MCF 10A (cell line): ENCODE measurements at regions of chr22 and their contacts with region 1.

Region 1: GRCh38 chr22:32401486-32401885 is 10.6 kb downstream of the RTCB start:
- DNase-seq: no peak
- H3K4me3 Mint-ChIP-seq: no peak overlapping the region
- H3K27ac Mint-ChIP-seq: peak overlapping the region; percentile 19
- H3K4me1 Mint-ChIP-seq: peaks cover 7% of the 10 kb centered on the region
- H3K27me3 Mint-ChIP-seq: no peaks in the 10 kb centered on the region
- CTCF ChIP-seq: no peak

Region 2: DNA sequence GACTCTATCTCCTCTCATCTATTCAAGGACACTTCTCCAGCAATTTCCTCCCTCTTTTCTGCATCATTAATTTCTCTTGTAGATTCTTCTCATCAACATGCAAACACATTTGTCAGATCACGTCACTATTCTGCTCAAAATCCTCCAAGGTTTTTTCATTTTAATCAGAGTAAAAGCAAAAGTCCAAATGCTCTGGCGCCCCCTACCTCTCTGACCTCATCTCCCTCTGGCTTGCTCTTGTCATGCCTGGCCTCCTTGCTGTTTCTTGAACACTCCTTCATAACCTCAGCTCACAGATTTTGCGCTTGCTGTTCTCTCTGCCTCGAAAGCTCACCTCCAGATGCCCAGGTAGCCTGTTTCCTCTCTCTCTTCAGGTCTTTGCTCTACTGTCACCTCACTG is 11.8 kb before region 1 on chr22:
- CTCF ChIA-PET with region 1: interaction called, 23 read pairs
- POLR2A ChIA-PET with region 1: interaction called, 3 read pairs
- intact Hi-C with region 1: no loop called
- DNase-seq: peak; percentile 19
- H3K4me3 Mint-ChIP-seq: no peak overlapping the region
- H3K27ac Mint-ChIP-seq: no peak overlapping the region
- H3K4me1 Mint-ChIP-seq: no peaks in the 10 kb centered on the region
- H3K27me3 Mint-ChIP-seq: no peaks in the 10 kb centered on the region
- CTCF ChIP-seq: peak; percentile 18

Region 3: DNA sequence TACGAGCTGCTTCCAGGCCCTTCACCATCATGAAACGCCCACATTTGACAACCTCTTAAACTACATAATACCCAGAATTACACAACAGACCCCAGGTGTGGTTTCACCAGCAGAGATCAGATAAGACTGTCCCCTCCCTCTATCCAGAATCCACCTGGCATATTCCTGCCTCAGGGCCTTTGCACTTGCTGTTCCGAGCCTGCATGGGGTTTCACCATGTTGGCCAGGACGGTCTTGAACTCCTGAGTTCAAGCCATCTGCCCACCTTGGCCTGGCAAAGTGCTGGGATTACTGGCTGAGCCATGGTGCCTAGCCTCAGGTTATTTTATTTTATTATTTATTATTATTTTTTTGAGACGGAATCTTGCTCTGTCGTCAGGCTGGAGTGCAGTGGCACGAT is 146.6 kb after region 1 on chr22:
- CTCF ChIA-PET with region 1: no interaction called
- POLR2A ChIA-PET with region 1: no interaction called
- intact Hi-C with region 1: no loop called
- DNase-seq: no peak
- H3K4me3 Mint-ChIP-seq: no peak overlapping the region
- H3K27ac Mint-ChIP-seq: no peak overlapping the region
- H3K4me1 Mint-ChIP-seq: peaks cover 12% of the 10 kb centered on the region
- H3K27me3 Mint-ChIP-seq: no peaks in the 10 kb centered on the region
- CTCF ChIP-seq: no peak